Natural killer cell (primary cell): ENCODE measurements at regions of chr1 and their contacts with region 1.

Region 1: DNA sequence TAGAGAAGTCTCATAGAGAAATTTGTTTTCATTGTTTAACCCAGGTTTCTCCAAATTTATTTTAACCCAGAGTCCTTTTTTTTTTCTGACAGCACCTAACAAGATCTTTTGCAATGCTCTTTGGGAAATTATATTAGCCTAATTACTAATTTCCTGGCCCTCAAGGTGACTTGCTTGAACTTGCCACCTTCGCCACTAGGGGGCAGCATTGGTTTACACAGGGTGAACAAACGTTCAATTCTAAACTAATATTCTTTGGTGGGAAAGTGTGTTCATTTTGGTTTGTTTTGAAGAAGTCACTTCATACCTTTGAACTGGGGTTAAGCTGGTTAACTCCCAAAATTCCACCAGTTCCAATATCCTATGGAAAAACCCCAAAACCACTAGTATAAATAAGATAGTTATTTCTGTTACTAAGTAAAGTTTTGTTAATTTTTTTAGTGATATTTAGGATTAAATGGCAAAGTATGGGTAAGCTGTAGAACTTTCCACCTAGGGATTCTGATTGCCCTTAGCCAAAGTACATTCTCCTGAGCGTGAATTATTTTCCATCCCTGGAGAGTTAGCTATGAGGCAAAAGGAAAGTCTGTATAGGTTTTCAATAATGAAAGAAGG is 13.0 kb downstream of the CCDC190 start:
- DNase-seq: peak; percentile 66 to 85
- ATAC-seq: peak; percentile 49 to 69 (median 62)
- H3K4me3 ChIP-seq: no peak overlapping the region
- H3K4me3 Mint-ChIP-seq: no peak overlapping the region
- H3K27ac ChIP-seq: no peak overlapping the region
- H3K27ac Mint-ChIP-seq: no peak overlapping the region
- H3K4me1 ChIP-seq: no peaks in the 10 kb centered on the region
- H3K4me1 Mint-ChIP-seq: no peaks in the 10 kb centered on the region
- H3K27me3 ChIP-seq: peaks cover 7% of the 10 kb centered on the region
- H3K27me3 Mint-ChIP-seq: peaks cover 11 to 18% of the 10 kb centered on the region in 2 donors
- CTCF ChIP-seq: peak; percentile 98

Region 2: GRCh38 chr1:162626094-162626493 is 221.9 kb before region 1 on chr1:
- intact Hi-C with region 1: no loop called
- DNase-seq: no peak
- ATAC-seq: no peak
- H3K4me3 ChIP-seq: no peak overlapping the region
- H3K4me3 Mint-ChIP-seq: no peak overlapping the region
- H3K27ac ChIP-seq: no peak overlapping the region
- H3K27ac Mint-ChIP-seq: no peak overlapping the region
- H3K4me1 ChIP-seq: no peaks in the 10 kb centered on the region
- H3K4me1 Mint-ChIP-seq: no peaks in the 10 kb centered on the region
- H3K27me3 ChIP-seq: no peaks in the 10 kb centered on the region
- H3K27me3 Mint-ChIP-seq: peaks cover under 1 to 3% of the 10 kb centered on the region in 2 donors
- CTCF ChIP-seq: no peak

Region 3: GRCh38 chr1:162868972-162869371 is 21.0 kb after region 1 on chr1:
- intact Hi-C with region 1: no loop called
- DNase-seq: no peak
- ATAC-seq: no peak
- H3K4me3 ChIP-seq: no peak overlapping the region
- H3K4me3 Mint-ChIP-seq: no peak overlapping the region
- H3K27ac ChIP-seq: no peak overlapping the region
- H3K27ac Mint-ChIP-seq: no peak overlapping the region
- H3K4me1 ChIP-seq: no peaks in the 10 kb centered on the region
- H3K4me1 Mint-ChIP-seq: no peaks in the 10 kb centered on the region
- H3K27me3 ChIP-seq: no peaks in the 10 kb centered on the region
- H3K27me3 Mint-ChIP-seq: peaks cover 30 to 54% of the 10 kb centered on the region in 2 donors
- CTCF ChIP-seq: no peak

Region 4: GRCh38 chr1:163174524-163175437 is 326.8 kb after region 1 on chr1:
- intact Hi-C with region 1: loop called (anchors 5 kb)
- DNase-seq: peak in 1 of 2 donors; percentile 40
- ATAC-seq: no peak
- H3K4me3 ChIP-seq: no peak overlapping the region
- H3K4me3 Mint-ChIP-seq: no peak overlapping the region
- H3K27ac ChIP-seq: no peak overlapping the region
- H3K27ac Mint-ChIP-seq: no peak overlapping the region
- H3K4me1 ChIP-seq: no peaks in the 10 kb centered on the region
- H3K4me1 Mint-ChIP-seq: no peaks in the 10 kb centered on the region
- H3K27me3 ChIP-seq: no peaks in the 10 kb centered on the region
- H3K27me3 Mint-ChIP-seq: peaks cover 5 to 19% of the 10 kb centered on the region in 2 donors
- CTCF ChIP-seq: peak; percentile 35